ENCODE measurements at regions of chr1 and their contacts with region 1.

Region 1: DNA sequence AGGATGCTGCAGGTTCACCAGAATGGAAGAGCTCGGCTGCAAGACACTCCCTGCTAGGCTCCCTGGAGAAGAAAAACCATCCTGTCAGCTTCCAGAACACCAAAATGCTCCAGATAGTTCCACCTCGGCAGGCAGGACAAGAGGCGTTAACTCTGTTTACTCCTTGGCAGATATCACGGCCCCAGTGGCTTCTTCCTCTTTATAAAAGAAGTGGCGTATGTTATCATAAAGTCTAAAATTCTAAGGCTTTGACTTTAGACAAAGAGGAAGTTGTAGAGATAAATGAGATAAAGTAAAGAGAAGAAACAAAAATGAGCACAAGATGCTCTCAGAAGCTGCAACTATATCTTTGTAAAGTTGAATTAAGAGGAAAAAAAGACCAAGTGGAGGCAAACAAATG is 24.3 kb upstream of the MTF1 start:
- DNase-seq: no peak
- H3K4me3 ChIP-seq: no peak overlapping the region
- H3K27ac ChIP-seq: no peak overlapping the region
- H3K4me1 ChIP-seq: no peaks in the 10 kb centered on the region
- H3K27me3 ChIP-seq: no peaks in the 10 kb centered on the region
- CTCF ChIP-seq: no peak
- EP300 ChIP-seq: no peak
- POLR2A ChIP-seq: no peak

Region 2: DNA sequence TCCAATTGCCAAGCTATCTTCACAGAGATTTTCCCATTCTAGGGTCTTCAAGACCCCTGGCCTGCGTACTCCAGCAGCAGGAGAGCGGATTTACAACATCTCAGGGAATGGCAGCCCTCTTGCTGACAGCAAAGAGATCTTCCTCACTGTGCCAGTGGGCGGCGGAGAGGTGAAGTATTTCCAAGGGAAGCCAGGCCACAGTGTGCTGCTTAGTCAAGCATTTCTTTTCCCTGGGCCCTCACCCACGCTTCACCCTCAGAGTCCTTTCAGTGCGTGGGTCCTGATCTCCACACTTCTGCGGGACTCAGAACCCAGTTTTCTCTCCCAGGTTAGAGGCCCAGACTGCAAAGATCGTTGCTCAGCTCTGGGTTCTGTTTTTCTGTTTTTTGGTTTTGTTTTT is 178.3 kb before region 1 on chr1:
- intact Hi-C with region 1: no loop called
- DNase-seq: no peak
- H3K4me3 ChIP-seq: no peak overlapping the region
- H3K27ac ChIP-seq: no peak overlapping the region
- H3K4me1 ChIP-seq: no peaks in the 10 kb centered on the region
- H3K27me3 ChIP-seq: no peaks in the 10 kb centered on the region
- CTCF ChIP-seq: no peak
- EP300 ChIP-seq: no peak
- POLR2A ChIP-seq: no peak

Region 3: GRCh38 chr1:37811027-37811655 is 72.5 kb before region 1 on chr1:
- intact Hi-C with region 1: no loop called
- DNase-seq: no peak
- H3K4me3 ChIP-seq: no peak overlapping the region
- H3K27ac ChIP-seq: peak overlapping the region in 1 of 4 donors; percentile 22
- H3K4me1 ChIP-seq: peaks cover 19 to 43% (median 40%) of the 10 kb centered on the region in 4 donors
- H3K27me3 ChIP-seq: no peaks in the 10 kb centered on the region
- CTCF ChIP-seq: peak; percentile 47 to 87 (median 59)
- EP300 ChIP-seq: no peak
- POLR2A ChIP-seq: no peak

Region 4: DNA sequence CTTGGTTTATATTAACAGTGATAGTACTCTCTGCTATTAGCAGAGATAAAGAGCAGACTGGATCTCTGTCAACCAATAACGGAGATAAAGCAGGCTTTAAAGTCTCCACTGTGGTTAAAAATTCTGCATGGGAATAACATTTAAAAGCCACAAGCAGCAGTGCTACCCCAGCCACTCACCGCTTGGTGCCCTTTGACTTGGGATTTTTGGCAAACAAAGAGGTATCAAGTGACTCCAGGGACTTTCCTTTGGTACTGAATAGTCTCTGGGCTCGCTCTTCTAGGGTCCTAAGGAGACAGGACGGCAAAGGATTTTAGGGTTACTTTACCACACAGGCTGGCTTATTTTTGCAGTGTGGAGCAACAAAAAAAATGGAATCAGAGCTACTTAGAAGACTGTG is 94.9 kb after region 1 on chr1:
- intact Hi-C with region 1: loop called (anchors 10 kb)
- DNase-seq: no peak
- H3K4me3 ChIP-seq: no peak overlapping the region
- H3K27ac ChIP-seq: no peak overlapping the region
- H3K4me1 ChIP-seq: no peaks in the 10 kb centered on the region
- H3K27me3 ChIP-seq: no peaks in the 10 kb centered on the region
- CTCF ChIP-seq: no peak
- EP300 ChIP-seq: no peak
- POLR2A ChIP-seq: no peak

Region 5: DNA sequence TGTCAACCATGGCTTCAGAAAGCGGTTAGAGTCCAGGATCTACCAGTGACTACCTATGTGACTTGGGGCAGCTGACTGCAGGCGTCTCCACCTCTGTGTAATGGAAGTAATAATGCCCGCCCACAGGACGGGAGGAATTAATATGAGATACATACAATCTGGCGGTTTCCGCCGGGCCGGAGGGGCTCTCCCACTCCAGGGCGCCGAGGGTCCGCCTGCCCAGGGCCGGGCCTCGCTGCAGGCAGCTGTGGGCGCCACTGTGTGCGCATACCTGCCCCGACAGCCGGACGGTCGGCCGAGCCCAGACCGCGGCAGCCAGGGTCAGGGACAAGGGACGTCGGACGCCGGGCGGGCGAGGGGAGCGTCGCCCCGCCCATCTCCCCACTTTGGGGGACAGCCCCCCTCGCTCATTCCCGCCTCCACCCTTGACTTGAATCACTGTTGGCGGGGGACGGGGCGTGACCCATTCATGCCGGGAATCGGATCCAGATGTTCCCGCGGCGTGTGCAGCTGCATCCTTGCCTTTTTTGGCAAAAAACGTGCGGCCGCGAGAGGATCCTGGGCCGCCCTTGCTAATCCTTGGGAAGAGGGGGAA is 112.2 kb after region 1 on chr1:
- intact Hi-C with region 1: no loop called
- DNase-seq: peak; percentile 93
- H3K4me3 ChIP-seq: peak overlapping the region; percentile 58 to 71 (median 62)
- H3K27ac ChIP-seq: peak overlapping the region; percentile 93 to 97 (median 95)
- H3K4me1 ChIP-seq: peaks cover 60 to 64% (median 63%) of the 10 kb centered on the region in 4 donors
- H3K27me3 ChIP-seq: no peaks in the 10 kb centered on the region
- CTCF ChIP-seq: no peak
- EP300 ChIP-seq: peak; percentile 26
- POLR2A ChIP-seq: no peak

Region 6: DNA sequence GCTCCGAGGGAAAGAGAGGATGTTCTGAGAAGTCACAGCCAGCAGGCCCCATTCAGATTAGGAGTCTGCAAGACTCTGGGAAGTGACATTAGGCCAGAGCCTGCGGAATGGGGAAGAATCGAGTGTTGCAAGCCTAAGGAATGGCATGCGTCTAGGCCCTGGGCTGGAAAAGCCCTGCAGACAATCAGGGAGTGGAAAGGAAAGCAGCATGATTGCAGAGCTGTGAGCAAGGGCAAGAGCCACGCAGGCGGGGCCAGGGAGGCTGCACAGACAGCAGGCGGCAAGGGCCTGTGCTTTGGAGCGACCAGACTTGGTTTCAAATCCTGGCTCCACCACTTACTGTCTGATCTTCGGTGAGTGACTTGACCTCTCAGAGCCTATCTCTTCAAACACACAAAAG is 857.7 kb after region 1 on chr1:
- intact Hi-C with region 1: no loop called
- DNase-seq: no peak
- H3K4me3 ChIP-seq: no peak overlapping the region
- H3K27ac ChIP-seq: no peak overlapping the region
- H3K4me1 ChIP-seq: no peaks in the 10 kb centered on the region
- H3K27me3 ChIP-seq: peaks cover 0 to 10% (median 0%) of the 10 kb centered on the region in 4 donors
- CTCF ChIP-seq: no peak
- EP300 ChIP-seq: no peak
- POLR2A ChIP-seq: no peak

Measured in esophagus muscularis mucosa (tissue), 4 donors.